ENCODE measurements at regions of chr19 and their contacts with region 1.

Region 1: DNA sequence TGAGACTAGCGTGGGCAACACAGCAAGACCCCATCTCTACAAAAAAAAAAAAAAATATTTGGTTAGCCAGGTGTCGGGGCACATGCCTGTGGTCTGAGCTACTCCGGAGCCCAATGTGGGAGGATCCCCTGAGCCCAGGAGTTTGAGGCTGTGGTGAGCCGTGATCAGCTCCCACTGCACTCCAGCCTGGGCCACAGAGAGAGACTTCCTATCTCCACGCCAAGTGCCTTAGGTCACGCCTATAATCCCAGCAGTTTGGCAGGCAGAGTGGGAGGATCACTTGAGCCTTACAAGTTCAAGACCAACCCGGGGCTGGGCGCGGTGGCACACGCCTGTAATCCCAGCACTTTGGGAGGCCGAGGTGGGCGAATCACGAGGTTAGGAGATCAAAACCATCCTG is 8.7 kb upstream of the ADAT3 start:
- DNase-seq: no peak
- ATAC-seq: no peak
- H3K4me3 Mint-ChIP-seq: peak overlapping the region; percentile 84
- H3K27ac Mint-ChIP-seq: peak overlapping the region; percentile 99
- H3K4me1 Mint-ChIP-seq: peaks cover 45% of the 10 kb centered on the region
- H3K27me3 Mint-ChIP-seq: no peaks in the 10 kb centered on the region

Region 2: DNA sequence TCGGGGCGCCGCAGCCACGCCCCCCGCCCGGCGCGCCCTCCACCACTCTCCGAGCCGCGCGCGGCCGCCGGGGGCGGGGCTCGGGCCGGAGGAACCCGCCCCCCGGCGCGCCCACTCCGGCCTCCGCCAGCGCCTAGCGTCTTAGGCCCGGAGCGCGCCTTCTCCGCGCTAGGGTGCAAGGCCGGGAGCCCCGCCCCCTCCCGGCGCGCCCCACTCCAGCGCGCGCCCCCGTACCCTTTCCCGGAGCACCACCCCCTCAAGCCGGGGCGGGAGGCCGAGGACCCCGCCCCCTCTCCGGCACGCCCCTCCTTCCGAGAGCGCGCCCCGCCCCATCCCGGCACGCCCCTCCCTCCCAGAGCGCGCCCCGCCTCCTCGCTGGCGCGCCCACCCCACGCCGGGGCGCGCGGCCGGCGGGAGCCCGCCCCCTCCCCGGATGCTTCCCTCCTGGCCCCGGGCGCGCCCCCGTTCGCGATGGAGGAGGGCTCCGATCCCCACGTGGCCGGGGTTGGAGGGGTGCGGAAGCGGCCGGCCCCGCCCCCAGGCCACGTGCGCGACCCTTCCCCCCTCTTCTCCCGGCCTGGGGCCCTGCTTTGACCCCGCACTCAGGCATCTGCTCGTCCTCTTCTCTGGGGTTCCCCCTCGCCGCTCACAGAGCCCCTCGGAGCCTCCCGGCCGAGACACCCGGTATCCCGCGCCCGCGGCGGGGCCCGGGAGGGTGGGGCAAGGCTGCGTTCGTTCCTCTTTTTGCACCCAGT is 32.6 kb before region 1 on chr19:
- CTCF ChIA-PET with region 1: interaction called, 11 read pairs
- POLR2A ChIA-PET with region 1: interaction called, 14 read pairs
- DNase-seq: peak; percentile 95
- ATAC-seq: peak; percentile 73
- H3K4me3 Mint-ChIP-seq: peak overlapping the region; percentile 75
- H3K27ac Mint-ChIP-seq: peak overlapping the region; percentile 85
- H3K4me1 Mint-ChIP-seq: peaks cover 53% of the 10 kb centered on the region
- H3K27me3 Mint-ChIP-seq: no peaks in the 10 kb centered on the region

Region 3: GRCh38 chr19:1868971-1869370 is 27.5 kb before region 1 on chr19:
- CTCF ChIA-PET with region 1: interaction called, 24 read pairs
- POLR2A ChIA-PET with region 1: interaction called, 14 read pairs
- DNase-seq: no peak
- ATAC-seq: no peak
- H3K4me3 Mint-ChIP-seq: no peak overlapping the region
- H3K27ac Mint-ChIP-seq: peak overlapping the region; percentile 20
- H3K4me1 Mint-ChIP-seq: peaks cover 44% of the 10 kb centered on the region
- H3K27me3 Mint-ChIP-seq: no peaks in the 10 kb centered on the region

Region 4: GRCh38 chr19:1875646-1876495 is 20.6 kb before region 1 on chr19:
- CTCF ChIA-PET with region 1: interaction called, 24 read pairs
- POLR2A ChIA-PET with region 1: interaction called, 29 read pairs
- DNase-seq: peak; percentile 93
- ATAC-seq: peak; percentile 86
- H3K4me3 Mint-ChIP-seq: peak overlapping the region; percentile 95
- H3K27ac Mint-ChIP-seq: peak overlapping the region; percentile 98
- H3K4me1 Mint-ChIP-seq: peaks cover 39% of the 10 kb centered on the region
- H3K27me3 Mint-ChIP-seq: no peaks in the 10 kb centered on the region

Region 5: DNA sequence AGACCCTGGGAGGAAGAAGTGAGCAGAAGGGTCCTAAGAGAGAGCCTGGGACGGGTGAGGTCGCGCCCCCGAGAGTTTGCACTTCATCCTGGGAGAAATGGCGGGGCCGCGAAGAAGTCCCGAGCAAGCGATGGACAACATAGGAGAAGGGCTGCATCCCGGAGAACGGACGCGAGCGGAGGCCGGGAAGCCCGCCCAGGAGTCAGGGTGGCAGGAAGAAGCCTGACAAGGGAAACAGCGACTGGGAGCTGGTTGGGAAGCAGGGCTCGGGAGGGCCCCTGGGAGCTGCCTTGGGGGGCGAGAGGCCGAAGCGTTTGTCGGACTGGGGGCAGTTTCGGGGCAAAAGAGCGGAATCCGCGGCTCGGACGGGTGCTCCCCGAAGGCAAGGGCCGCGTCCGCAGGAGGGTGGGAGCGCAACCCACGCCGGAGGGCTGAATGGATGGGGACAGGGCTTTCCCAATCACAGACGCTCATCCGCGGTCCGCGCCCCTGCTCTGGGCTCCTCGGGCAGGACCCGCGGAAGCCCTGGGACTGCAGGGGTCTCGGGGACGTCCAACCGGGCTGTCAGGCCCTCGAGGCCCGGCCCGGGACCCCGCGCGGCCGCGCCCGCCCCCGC is 11.7 kb before region 1 on chr19:
- CTCF ChIA-PET with region 1: interaction called, 9 read pairs
- POLR2A ChIA-PET with region 1: interaction called, 26 read pairs
- DNase-seq: no peak
- ATAC-seq: peak; percentile 9
- H3K4me3 Mint-ChIP-seq: peak overlapping the region; percentile 93
- H3K27ac Mint-ChIP-seq: peak overlapping the region; percentile 95
- H3K4me1 Mint-ChIP-seq: peaks cover 50% of the 10 kb centered on the region
- H3K27me3 Mint-ChIP-seq: no peaks in the 10 kb centered on the region

Measured in activated CD8-positive, alpha-beta T cell treated with anti-CD3 and anti-CD28 coated beads, Interleukin-2, amount 10 ng/mL, durations not matched to agents 7 days and 5 days (primary cell).